ENCODE measurements at regions of chr2 and their contacts with region 1.

Region 1: DNA sequence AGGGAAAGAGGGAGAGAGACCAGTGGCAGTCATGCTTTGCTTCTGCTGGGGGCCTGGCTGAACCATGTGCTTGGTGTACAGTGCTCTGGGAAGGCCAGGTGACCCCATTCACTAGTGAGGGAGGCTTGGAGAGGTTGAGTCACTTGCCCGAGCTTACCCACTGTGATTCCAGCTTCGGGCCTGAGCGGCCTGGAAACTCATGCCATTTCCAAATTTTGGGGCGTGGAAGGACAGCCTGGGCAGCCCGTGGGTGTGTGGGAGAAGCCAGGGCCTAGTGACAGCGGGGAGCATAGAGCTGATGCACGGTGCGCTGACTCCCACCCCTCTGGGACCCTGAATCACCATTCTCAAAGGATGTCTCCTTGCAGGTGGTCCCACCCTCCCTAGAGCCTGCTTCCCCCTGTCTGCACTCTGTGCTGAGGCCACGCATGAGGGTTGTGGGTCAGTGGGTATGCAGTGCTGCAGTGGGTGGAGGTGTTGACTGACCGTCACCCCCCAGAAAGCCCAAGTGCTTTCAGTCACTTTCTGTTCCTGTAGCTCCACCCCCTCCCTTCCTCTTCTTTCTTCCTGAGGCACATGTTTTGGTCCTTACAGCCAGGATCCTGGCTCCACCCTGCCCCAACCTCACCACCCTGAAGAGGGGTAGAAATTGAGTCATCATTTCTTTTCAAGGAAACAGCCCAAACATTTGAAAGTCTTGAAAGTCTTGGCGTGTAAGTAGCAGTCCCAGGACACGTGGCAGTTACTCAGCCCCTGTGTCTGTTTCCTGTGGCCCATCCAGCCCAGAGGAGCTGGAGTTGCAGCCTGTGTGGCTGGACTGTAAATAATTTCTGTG is 69.3 kb upstream of the MCFD2 start:
- DNase-seq: peak; percentile 92
- H3K4me3 ChIP-seq: no peak overlapping the region
- H3K27ac ChIP-seq: peak overlapping the region; percentile 77
- H3K4me1 ChIP-seq: peaks cover 48% of the 10 kb centered on the region
- H3K27me3 ChIP-seq: no peaks in the 10 kb centered on the region
- CTCF ChIP-seq: no peak

Region 2: GRCh38 chr2:46915811-46916630 is 68.8 kb before region 1 on chr2:
- CTCF ChIA-PET with region 1: interaction called, 3 read pairs
- dilution Hi-C with region 1: no loop called
- in situ Hi-C with region 1: no loop called
- intact Hi-C with region 1: loop called (anchors 1 kb)
- DNase-seq: peak; percentile 87
- H3K4me3 ChIP-seq: peak overlapping the region; percentile 67 to 97 (median 74)
- H3K27ac ChIP-seq: peak overlapping the region; percentile 92
- H3K4me1 ChIP-seq: peaks cover 26% of the 10 kb centered on the region
- H3K27me3 ChIP-seq: no peaks in the 10 kb centered on the region
- CTCF ChIP-seq: no peak

Region 3: GRCh38 chr2:46970334-46971288 is 14.2 kb before region 1 on chr2:
- CTCF ChIA-PET with region 1: no interaction called
- dilution Hi-C with region 1: no loop called
- in situ Hi-C with region 1: no loop called
- intact Hi-C with region 1: loop called (anchors 1 kb)
- DNase-seq: peak; percentile 89
- H3K4me3 ChIP-seq: no peak overlapping the region
- H3K27ac ChIP-seq: peak overlapping the region; percentile 51
- H3K4me1 ChIP-seq: peaks cover 48% of the 10 kb centered on the region
- H3K27me3 ChIP-seq: no peaks in the 10 kb centered on the region
- CTCF ChIP-seq: no peak

Region 4: DNA sequence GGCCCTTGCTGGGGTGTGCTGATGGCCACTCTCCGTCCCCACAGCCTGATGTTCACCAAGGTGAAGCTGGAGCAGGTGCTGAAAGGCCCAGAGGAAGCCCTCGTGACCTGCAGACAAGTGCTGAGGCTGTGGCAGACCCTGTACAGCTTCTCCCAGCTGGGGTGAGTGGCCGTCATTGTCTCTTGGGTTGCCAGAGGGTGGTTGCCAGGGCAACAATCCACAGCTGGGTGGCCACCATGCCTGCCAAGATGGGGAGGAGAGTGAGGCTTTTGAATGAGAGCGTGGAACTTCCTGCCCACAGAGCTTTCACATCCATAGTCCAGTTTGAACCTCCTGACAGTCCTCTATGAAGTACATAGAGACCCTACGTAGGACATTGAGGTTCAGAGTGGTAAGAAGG is 61.4 kb after region 1 on chr2:
- CTCF ChIA-PET with region 1: no interaction called
- dilution Hi-C with region 1: no loop called
- in situ Hi-C with region 1: no loop called
- intact Hi-C with region 1: no loop called
- DNase-seq: no peak
- H3K4me3 ChIP-seq: no peak overlapping the region
- H3K27ac ChIP-seq: no peak overlapping the region
- H3K4me1 ChIP-seq: peaks cover 30% of the 10 kb centered on the region
- H3K27me3 ChIP-seq: no peaks in the 10 kb centered on the region
- CTCF ChIP-seq: no peak

Region 5: GRCh38 chr2:47309952-47310800 is 325.3 kb after region 1 on chr2:
- CTCF ChIA-PET with region 1: no interaction called
- dilution Hi-C with region 1: no loop called
- in situ Hi-C with region 1: loop called in 1 of 2 experiments (anchors 10 kb)
- intact Hi-C with region 1: no loop called
- DNase-seq: no peak
- H3K4me3 ChIP-seq: no peak overlapping the region
- H3K27ac ChIP-seq: no peak overlapping the region
- H3K4me1 ChIP-seq: peaks cover 14% of the 10 kb centered on the region
- H3K27me3 ChIP-seq: no peaks in the 10 kb centered on the region
- CTCF ChIP-seq: no peak

Region 6: GRCh38 chr2:47386551-47386950 is 401.7 kb after region 1 on chr2:
- CTCF ChIA-PET with region 1: interaction called, 10 read pairs
- dilution Hi-C with region 1: no loop called
- in situ Hi-C with region 1: no loop called
- intact Hi-C with region 1: no loop called
- DNase-seq: no peak
- H3K4me3 ChIP-seq: no peak overlapping the region
- H3K27ac ChIP-seq: no peak overlapping the region
- H3K4me1 ChIP-seq: no peaks in the 10 kb centered on the region
- H3K27me3 ChIP-seq: no peaks in the 10 kb centered on the region
- CTCF ChIP-seq: no peak